Activated CD4-positive, alpha-beta memory T cell treated with anti-CD3 and anti-CD28 coated beads, Interleukin-2, amount 10 ng/mL, durations not matched to agents 7 days and 5 days (primary cell): ENCODE measurements at regions of chr17 and their contacts with region 1.

Region 1: GRCh38 chr17:50956750-50957523 is 90.8 kb upstream of the TOB1 start:
- DNase-seq: peak; percentile 73
- H3K4me3 Mint-ChIP-seq: no peak overlapping the region
- H3K27ac Mint-ChIP-seq: peak overlapping the region; percentile 59
- H3K4me1 Mint-ChIP-seq: peaks cover 15% of the 10 kb centered on the region
- H3K27me3 Mint-ChIP-seq: no peaks in the 10 kb centered on the region

Region 2: DNA sequence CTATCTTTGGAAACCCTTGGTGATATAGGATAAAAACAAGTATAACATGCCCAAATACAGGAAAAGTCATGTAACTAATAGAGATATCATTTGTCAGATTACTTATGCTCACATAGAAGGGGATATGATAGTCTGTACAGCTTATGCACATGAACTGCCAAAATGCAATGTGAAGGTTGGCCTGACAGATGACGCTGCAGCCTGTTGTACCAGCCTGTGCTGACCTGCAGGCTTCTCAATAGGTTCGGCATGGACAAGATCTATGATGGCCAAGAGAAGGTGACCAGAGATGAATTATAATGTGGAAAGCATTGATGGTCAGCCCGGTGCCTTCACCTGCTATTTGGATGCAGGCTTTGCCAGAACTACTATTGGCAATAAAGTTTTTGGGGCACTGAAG is 108.9 kb before region 1 on chr17:
- CTCF ChIA-PET with region 1: interaction called, 189 read pairs
- POLR2A ChIA-PET with region 1: interaction called, 37 read pairs
- DNase-seq: peak; percentile 11
- H3K4me3 Mint-ChIP-seq: no peak overlapping the region
- H3K27ac Mint-ChIP-seq: no peak overlapping the region
- H3K4me1 Mint-ChIP-seq: peaks cover 17% of the 10 kb centered on the region
- H3K27me3 Mint-ChIP-seq: no peaks in the 10 kb centered on the region

Region 3: GRCh38 chr17:50861071-50861676 is 95.8 kb before region 1 on chr17:
- CTCF ChIA-PET with region 1: interaction called, 18 read pairs
- POLR2A ChIA-PET with region 1: interaction called, 457 read pairs
- DNase-seq: no peak
- H3K4me3 Mint-ChIP-seq: no peak overlapping the region
- H3K27ac Mint-ChIP-seq: no peak overlapping the region
- H3K4me1 Mint-ChIP-seq: peaks cover 25% of the 10 kb centered on the region
- H3K27me3 Mint-ChIP-seq: no peaks in the 10 kb centered on the region

Region 4: GRCh38 chr17:50904521-50905459 is 52.1 kb before region 1 on chr17:
- CTCF ChIA-PET with region 1: no interaction called
- POLR2A ChIA-PET with region 1: no interaction called
- DNase-seq: no peak
- H3K4me3 Mint-ChIP-seq: no peak overlapping the region
- H3K27ac Mint-ChIP-seq: peak overlapping the region; percentile 85
- H3K4me1 Mint-ChIP-seq: peaks cover 70% of the 10 kb centered on the region
- H3K27me3 Mint-ChIP-seq: no peaks in the 10 kb centered on the region